ENCODE measurements at regions of chr3 and their contacts with region 1.

Region 1: DNA sequence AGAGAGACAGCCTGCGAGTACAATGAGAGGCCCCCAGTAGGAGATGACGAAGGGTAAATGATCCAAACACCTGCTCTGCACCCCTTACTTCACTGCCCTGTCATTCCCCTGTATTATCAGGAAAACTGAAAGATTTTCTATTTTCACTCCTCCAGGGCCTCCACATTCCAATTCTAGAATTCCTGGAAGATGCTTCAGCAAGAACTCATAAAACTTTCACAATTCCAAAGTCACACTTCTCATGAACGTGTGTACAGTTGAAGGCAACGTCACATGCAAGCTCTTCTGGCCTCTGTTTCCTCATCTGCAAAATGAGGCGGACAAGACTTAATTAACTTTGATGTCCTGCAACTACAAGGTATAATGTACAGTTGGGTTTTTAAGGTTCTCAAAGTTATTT is 62.8 kb upstream of the SPATA12 start:
- DNase-seq: no peak
- H3K4me3 Mint-ChIP-seq: no peak overlapping the region
- H3K27ac Mint-ChIP-seq: no peak overlapping the region
- H3K4me1 Mint-ChIP-seq: no peaks in the 10 kb centered on the region
- H3K27me3 Mint-ChIP-seq: no peaks in the 10 kb centered on the region
- CTCF ChIP-seq: no peak

Region 2: DNA sequence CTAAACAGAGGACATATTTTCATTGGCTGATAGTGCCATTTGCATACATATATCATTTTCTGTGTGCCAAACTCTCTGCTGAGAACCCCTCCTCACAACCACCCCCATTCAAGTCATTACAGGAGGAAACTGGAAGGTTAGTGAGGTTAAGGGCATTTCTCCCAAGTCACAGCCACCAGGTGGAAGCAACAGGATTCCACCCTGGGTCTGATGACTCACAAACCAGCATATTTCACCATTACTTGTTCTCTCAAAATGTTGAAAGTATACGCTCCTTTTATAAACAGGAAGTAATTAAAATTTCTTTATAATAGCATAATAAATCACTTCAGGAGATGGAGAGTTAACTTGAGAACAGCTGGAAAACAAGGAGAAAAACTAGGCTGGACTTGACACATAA is 1112.0 kb before region 1 on chr3:
- CTCF ChIA-PET with region 1: no interaction called
- POLR2A ChIA-PET with region 1: no interaction called
- intact Hi-C with region 1: no loop called
- DNase-seq: peak; percentile 90
- H3K4me3 Mint-ChIP-seq: peak overlapping the region; percentile 17
- H3K27ac Mint-ChIP-seq: peak overlapping the region; percentile 89
- H3K4me1 Mint-ChIP-seq: peaks cover 20% of the 10 kb centered on the region
- H3K27me3 Mint-ChIP-seq: no peaks in the 10 kb centered on the region
- CTCF ChIP-seq: peak; percentile 25

Region 3: DNA sequence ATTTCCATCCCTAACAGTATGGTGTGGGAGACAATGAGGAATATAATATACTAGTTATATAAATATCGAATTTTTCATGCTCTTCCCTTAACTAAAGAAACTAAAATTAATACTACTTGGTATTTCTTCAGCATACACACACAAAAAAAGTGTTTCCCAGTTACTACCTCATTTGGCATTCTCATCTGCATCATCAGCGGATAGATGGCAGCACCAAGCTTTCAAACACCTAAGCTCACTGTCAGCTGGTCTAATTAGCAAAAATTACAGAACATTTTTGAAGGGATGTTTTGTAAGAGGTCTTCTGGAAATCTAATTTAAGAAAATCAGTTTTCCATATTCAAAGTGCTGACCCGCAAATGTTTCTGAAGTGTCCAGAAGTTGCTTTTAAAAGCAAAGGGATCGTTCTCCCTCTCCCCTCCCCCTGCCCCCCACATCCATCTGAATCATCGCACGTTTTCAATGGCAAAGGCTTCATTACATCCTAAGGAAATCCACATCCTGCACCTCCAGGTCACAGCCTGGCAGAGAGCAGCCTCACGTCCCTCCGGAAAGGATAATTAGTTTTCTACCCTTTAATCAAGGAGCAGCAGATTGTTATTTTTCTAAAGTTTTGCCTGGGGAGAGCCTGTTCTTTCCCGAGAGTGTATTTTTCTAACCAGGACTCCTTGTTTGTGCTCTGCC is 23.3 kb before region 1 on chr3:
- CTCF ChIA-PET with region 1: interaction called, 10 read pairs
- POLR2A ChIA-PET with region 1: no interaction called
- intact Hi-C with region 1: no loop called
- DNase-seq: no peak
- H3K4me3 Mint-ChIP-seq: no peak overlapping the region
- H3K27ac Mint-ChIP-seq: no peak overlapping the region
- H3K4me1 Mint-ChIP-seq: peaks cover 5% of the 10 kb centered on the region
- H3K27me3 Mint-ChIP-seq: no peaks in the 10 kb centered on the region
- CTCF ChIP-seq: no peak

Region 4: DNA sequence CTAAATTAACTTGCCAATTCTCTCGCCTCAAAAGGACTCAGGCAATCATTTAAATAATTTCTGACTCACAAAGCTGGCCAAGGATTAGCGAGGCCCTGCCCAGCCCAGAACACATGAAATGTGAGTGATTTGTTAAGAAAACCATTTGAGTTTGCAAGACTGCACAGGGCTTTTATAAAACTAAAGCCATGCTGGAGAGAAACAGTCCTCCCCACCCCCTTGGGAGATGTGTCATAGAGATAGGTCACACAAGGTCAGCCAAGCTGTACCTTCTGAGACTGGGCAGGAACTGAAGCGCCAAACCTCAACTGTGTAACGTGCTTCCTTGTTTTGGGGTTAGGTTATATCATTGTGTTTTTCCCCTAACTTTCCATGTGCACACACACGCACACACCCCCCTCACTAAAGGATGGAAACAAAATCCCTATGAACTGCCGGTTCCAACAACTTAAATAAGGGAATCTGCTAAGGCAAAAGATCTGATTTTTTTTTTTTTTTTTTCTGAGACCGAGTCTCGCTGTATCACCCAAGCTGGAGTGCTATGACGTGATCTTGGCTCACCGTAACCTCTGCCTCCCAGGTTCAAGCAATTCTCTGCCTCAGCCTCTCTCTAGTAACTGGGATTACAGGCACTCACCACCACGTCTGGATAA is 70.9 kb after region 1 on chr3:
- CTCF ChIA-PET with region 1: interaction called, 12 read pairs
- POLR2A ChIA-PET with region 1: interaction called, 8 read pairs
- intact Hi-C with region 1: no loop called
- DNase-seq: peak; percentile 93
- H3K4me3 Mint-ChIP-seq: peak overlapping the region; percentile 66
- H3K27ac Mint-ChIP-seq: peak overlapping the region; percentile 88
- H3K4me1 Mint-ChIP-seq: peaks cover 16% of the 10 kb centered on the region
- H3K27me3 Mint-ChIP-seq: no peaks in the 10 kb centered on the region
- CTCF ChIP-seq: no peak

Region 5: GRCh38 chr3:57094575-57094974 is 96.9 kb after region 1 on chr3:
- CTCF ChIA-PET with region 1: interaction called, 45 read pairs
- POLR2A ChIA-PET with region 1: interaction called, 4 read pairs
- intact Hi-C with region 1: no loop called
- DNase-seq: no peak
- H3K4me3 Mint-ChIP-seq: no peak overlapping the region
- H3K27ac Mint-ChIP-seq: no peak overlapping the region
- H3K4me1 Mint-ChIP-seq: peaks cover 6% of the 10 kb centered on the region
- H3K27me3 Mint-ChIP-seq: no peaks in the 10 kb centered on the region
- CTCF ChIP-seq: no peak

Region 6: DNA sequence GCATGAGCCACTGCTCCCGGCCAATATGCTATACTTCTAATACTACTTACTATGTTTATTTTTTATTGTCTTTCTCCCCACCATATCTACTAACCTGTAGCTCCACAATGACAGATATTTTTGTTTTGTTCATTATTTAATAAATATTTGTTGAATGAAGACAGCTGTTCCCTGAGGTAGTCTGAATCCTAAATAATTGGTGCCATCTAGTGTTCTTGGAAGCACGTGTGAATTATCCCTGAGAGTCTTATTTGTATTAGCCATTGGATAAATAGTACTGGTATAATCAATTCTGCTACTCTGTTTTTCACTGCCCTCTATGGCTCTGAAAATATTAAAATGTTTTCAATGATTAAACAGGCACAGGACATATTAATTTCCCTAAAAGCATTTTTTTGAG is 224.2 kb after region 1 on chr3:
- CTCF ChIA-PET with region 1: interaction called, 33 read pairs
- POLR2A ChIA-PET with region 1: interaction called, 10 read pairs
- intact Hi-C with region 1: loop called (anchors 1 kb)
- DNase-seq: peak; percentile 39
- H3K4me3 Mint-ChIP-seq: no peak overlapping the region
- H3K27ac Mint-ChIP-seq: no peak overlapping the region
- H3K4me1 Mint-ChIP-seq: peaks cover 5% of the 10 kb centered on the region
- H3K27me3 Mint-ChIP-seq: no peaks in the 10 kb centered on the region
- CTCF ChIP-seq: peak; percentile 40